Right ventricle myocardium superior (tissue), 1 donor: ENCODE measurements at regions of chr13 and their contacts with region 1.

Region 1: GRCh38 chr13:33349986-33350826 is 64.7 kb upstream of the STARD13 start:
- DNase-seq: peak; percentile 76
- ATAC-seq: peak; percentile 84

Region 2: DNA sequence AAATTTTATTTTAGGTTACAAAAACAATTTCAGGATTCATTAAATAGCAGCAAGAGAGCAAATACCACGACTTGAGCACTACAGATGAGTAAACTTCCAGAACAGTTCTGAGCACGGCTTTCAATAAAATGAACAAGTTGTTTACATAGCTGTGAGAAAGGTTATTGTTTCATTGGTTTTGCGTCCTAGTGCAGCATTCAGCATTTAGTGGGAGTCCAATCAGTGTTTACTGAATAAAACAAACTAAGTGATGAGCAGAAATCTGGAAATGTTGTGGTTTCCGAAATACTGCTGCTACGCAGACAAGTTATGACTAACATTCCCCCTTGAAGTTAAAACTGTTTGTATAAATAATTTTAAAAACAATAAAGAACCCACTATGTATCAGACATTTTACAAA is 186.8 kb after region 1 on chr13:
- intact Hi-C with region 1: loop called (anchors 10 kb)
- DNase-seq: no peak
- ATAC-seq: no peak